Adrenal gland (tissue), 19 donors: ENCODE measurements at regions of chr1 and their contacts with region 1.

Region 1: GRCh38 chr1:156054500-156055280 is at the start of gene LAMTOR2:
- DNase-seq: peak; percentile 98 to 99 (median 98)
- H3K4me3 ChIP-seq: peak within 1 kb of the TSS; percentile 57 to 97 (median 84)
- H3K27ac ChIP-seq: peak within 1 kb of the TSS; percentile 73 to 94 (median 92)
- H3K4me1 ChIP-seq: peaks cover 0 to 22% of the 10 kb centered on the region in 2 donors
- H3K27me3 ChIP-seq: no peaks in the 10 kb centered on the region
- CTCF ChIP-seq: no peak
- POLR2A ChIP-seq: peak in 1 of 2 donors; percentile 54
- total RNA-seq, gene LAMTOR2: 53.6 to 140 (median 85.1) TPM

Region 2: DNA sequence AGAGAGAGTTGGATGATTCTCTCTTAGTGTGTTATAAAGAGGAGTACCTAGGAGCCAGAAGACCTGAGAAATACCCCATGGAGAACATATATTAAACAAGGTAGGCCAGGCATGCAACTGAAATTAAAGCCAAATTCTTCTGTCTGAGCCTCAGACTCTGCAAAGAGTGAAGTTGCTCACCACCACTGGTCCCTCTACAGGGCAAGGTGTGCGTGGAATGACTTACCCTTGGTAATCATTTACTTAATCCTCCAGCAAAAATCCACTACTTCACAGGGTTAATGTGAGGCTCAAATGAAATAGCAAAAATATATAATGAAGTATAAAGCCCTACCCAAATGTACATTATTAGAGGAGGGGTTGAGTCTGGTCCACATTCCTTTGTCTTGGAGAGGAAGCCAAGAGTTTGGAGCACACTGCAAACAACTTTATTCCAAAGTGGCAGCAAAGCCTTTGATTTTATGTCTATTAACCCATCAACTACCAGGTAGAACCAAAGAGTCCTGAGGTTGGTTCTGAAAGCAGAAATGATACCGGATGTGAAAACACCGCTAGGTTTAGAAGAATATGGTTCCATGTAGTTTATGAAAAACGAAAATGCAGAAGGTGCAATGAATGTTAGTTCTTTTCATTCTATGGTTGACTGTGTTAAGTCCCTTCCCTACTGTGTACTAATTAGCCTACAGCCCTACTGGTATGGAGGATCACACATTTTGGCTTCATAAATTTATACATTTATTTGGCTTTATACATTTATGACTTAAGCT is 42.5 kb before region 1 on chr1:
- intact Hi-C with region 1: loop called in 1 of 2 experiments (anchors 5 kb)
- DNase-seq: no peak
- H3K4me3 ChIP-seq: no peak overlapping the region
- H3K27ac ChIP-seq: no peak overlapping the region
- H3K4me1 ChIP-seq: peaks cover 0 to 5% of the 10 kb centered on the region in 2 donors
- H3K27me3 ChIP-seq: no peaks in the 10 kb centered on the region
- CTCF ChIP-seq: no peak
- POLR2A ChIP-seq: no peak